Cardiac septum (tissue), 1 donor: ENCODE measurements at regions of chr6 and their contacts with region 1.

Region 1: GRCh38 chr6:145372671-145373151 is 362.6 kb downstream of the EPM2A start:
- DNase-seq: peak; percentile 80

Region 2: GRCh38 chr6:145332001-145332400 is 40.7 kb before region 1 on chr6:
- intact Hi-C with region 1: loop called (anchors 5 kb)
- DNase-seq: no peak

Region 3: GRCh38 chr6:145428706-145429105 is 56.0 kb after region 1 on chr6:
- intact Hi-C with region 1: no loop called
- DNase-seq: no peak

Region 4: GRCh38 chr6:145633981-145634627 is 261.4 kb after region 1 on chr6:
- intact Hi-C with region 1: loop called (anchors 10 kb)
- DNase-seq: peak; percentile 85